ENCODE measurements at regions of chr19 and their contacts with region 1.

Region 1: DNA sequence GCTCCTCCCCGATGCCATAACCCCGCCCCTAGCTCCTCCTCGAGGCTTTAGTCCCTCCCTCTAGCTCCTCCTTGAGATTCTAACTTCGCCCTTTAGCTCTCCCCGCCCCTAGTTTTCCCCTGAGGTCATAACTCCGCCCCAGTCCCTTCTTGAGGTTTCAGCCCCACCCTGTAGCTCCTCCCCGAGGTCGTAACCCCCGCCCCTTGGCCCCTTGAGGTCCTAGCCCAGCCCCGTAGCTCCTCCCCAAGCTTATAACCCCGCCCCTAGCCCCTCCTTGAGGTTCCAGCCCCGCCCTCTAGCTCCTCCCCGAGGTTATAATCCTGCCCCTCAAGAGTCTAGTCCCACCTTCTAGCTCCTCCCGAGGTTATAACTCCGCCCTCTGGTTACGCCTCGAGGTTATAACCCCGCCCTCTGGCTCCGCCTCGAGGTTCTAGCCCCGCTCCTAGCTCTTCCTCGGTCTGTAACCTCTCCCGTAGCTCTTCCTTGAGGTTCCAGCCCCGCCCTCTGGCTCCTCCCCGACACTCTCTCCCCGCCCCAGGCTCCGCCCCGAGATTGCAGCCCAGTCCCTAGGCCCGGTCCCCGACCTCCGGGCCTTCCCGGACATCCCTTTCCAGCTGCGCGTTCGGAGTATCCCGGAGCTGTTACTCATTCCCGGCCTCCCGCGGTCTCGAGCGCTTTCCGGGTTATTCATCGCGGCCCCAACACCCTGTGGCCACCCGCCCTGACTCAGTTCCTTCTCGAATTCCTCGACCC is 1.4 kb downstream of the PLAUR start:
- DNase-seq: peak; percentile 99
- ATAC-seq: peak; percentile 86
- H3K4me3 Mint-ChIP-seq: peak overlapping the region; percentile 85
- H3K27ac Mint-ChIP-seq: peak overlapping the region; percentile 90
- H3K4me1 Mint-ChIP-seq: peaks cover 42% of the 10 kb centered on the region
- H3K27me3 Mint-ChIP-seq: no peaks in the 10 kb centered on the region

Region 2: DNA sequence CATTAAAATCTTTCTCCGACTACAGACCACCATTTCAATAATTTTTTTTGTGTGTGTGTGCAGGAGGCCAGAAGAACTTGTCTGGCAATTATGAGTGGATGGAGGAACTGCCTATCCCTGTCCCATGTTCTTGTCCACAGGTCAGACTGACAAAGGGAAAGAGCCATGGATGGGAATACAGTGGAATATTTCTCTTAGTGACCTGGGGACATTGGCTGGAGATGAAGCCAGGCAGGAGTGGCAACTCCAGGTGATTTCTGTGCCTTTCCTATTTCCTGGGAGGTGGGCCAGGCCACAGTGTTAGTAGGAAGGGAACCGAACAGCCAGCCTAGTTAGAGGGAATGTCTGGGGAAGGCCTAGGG is 402.9 kb before region 1 on chr19:
- CTCF ChIA-PET with region 1: no interaction called
- POLR2A ChIA-PET with region 1: no interaction called
- intact Hi-C with region 1: no loop called
- DNase-seq: no peak
- ATAC-seq: no peak
- H3K4me3 Mint-ChIP-seq: no peak overlapping the region
- H3K27ac Mint-ChIP-seq: no peak overlapping the region
- H3K4me1 Mint-ChIP-seq: no peaks in the 10 kb centered on the region
- H3K27me3 Mint-ChIP-seq: peaks cover 6% of the 10 kb centered on the region

Region 3: GRCh38 chr19:43416951-43417623 is 251.5 kb before region 1 on chr19:
- CTCF ChIA-PET with region 1: no interaction called
- POLR2A ChIA-PET with region 1: no interaction called
- intact Hi-C with region 1: no loop called
- DNase-seq: no peak
- ATAC-seq: no peak
- H3K4me3 Mint-ChIP-seq: no peak overlapping the region
- H3K27ac Mint-ChIP-seq: no peak overlapping the region
- H3K4me1 Mint-ChIP-seq: no peaks in the 10 kb centered on the region
- H3K27me3 Mint-ChIP-seq: no peaks in the 10 kb centered on the region

Region 4: GRCh38 chr19:43463381-43464136 is 205.0 kb before region 1 on chr19:
- CTCF ChIA-PET with region 1: interaction called, 10 read pairs
- POLR2A ChIA-PET with region 1: interaction called, 10 read pairs
- intact Hi-C with region 1: loop called (anchors 1 kb)
- DNase-seq: peak; percentile 100
- ATAC-seq: peak; percentile 90
- H3K4me3 Mint-ChIP-seq: peak overlapping the region; percentile 87
- H3K27ac Mint-ChIP-seq: peak overlapping the region; percentile 93
- H3K4me1 Mint-ChIP-seq: peaks cover 48% of the 10 kb centered on the region
- H3K27me3 Mint-ChIP-seq: no peaks in the 10 kb centered on the region

Region 5: GRCh38 chr19:43532962-43533545 is 135.5 kb before region 1 on chr19 and contains the start of gene ZNF575:
- CTCF ChIA-PET with region 1: interaction called, 9 read pairs
- POLR2A ChIA-PET with region 1: interaction called, 3 read pairs
- intact Hi-C with region 1: loop called (anchors 1 kb)
- DNase-seq: peak; percentile 95
- ATAC-seq: peak; percentile 57
- H3K4me3 Mint-ChIP-seq: peak within 1 kb of the TSS; percentile 83
- H3K27ac Mint-ChIP-seq: peak within 1 kb of the TSS; percentile 97
- H3K4me1 Mint-ChIP-seq: peaks cover 20% of the 10 kb centered on the region
- H3K27me3 Mint-ChIP-seq: no peaks in the 10 kb centered on the region
- total RNA-seq, gene ZNF575: 3.4 to 4.3 TPM

Region 6: DNA sequence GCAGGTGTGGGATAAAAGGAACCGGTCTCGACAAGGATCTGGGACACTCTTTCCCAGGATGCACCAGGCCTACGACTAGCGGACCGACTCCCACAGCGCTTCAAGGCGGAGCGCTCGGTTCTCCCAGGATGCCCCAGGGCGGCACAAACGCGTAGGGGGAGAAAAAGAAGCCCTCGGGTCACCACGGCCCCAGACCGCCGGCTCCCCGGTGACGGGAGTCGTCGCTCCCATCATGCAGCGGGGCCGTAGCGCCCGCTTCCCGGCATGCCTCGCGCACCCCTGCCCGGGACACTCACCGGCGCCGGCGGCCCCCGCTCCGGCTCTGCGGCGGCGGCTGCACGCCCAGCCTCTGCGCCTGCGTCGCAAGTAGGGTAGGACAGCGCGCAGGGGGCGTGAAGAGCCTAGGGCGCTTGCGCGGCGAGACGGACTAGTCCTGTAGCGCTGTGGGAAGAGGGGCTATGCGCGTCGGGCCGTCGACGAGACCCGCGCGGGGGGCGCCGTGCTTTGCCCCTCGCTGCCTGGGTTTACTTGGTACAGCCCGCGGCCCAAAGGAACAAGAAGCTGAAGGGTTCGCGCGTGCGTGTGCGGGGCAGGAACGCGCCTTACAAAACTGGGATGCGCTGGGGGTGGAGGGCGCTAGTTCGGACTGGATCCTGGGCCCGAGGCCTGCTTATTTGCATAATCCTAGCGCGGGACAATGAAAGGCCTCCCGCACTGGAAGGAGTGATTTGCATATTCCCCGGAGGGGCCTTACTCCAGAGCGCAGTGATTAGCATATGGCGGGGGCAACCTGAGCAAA is 49.1 kb before region 1 on chr19 and contains the start of gene ZNF428:
- CTCF ChIA-PET with region 1: interaction called, 3 read pairs
- POLR2A ChIA-PET with region 1: no interaction called
- intact Hi-C with region 1: loop called in 1 of 2 experiments (anchors 1 kb)
- DNase-seq: peak; percentile 94
- ATAC-seq: peak; percentile 92
- H3K4me3 Mint-ChIP-seq: peak within 1 kb of the TSS; percentile 94
- H3K27ac Mint-ChIP-seq: peak within 1 kb of the TSS; percentile 99
- H3K4me1 Mint-ChIP-seq: peaks cover 17% of the 10 kb centered on the region
- H3K27me3 Mint-ChIP-seq: no peaks in the 10 kb centered on the region
- total RNA-seq, gene ZNF428: 9.0 to 10.1 TPM

Region 7: DNA sequence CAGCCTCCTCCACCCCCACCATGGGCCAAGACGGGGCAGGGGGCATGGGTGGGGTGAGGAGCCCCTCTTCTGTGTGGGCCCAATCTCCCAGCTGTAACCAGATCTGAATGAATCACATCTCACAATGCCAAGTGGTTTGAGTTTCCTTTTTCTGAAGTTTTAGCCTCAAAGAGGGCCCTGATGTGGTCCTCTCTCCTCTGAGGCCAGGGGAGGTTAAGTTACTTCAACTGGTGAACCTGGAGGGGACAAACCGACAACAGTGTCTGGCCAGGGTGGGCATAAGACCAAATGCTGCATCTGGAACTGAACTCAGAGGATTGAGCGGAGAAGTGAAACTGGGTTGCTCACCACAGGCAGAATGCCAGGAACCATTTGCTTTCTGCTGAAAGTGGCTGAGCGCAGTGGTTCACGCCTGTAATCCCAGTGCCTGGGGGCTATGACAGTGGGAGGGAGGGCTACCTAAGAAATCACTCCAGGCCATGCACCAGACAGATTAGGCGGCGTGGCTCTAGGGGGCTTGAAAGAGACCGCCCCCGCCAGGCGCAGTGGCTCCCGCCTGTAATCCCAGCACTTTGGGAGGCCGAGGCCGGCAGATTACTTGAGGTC is 31.9 kb after region 1 on chr19:
- CTCF ChIA-PET with region 1: interaction called, 7 read pairs
- POLR2A ChIA-PET with region 1: interaction called, 9 read pairs
- intact Hi-C with region 1: loop called (anchors 1 to 2 kb)
- DNase-seq: peak; percentile 47
- ATAC-seq: peak; percentile 26
- H3K4me3 Mint-ChIP-seq: peak overlapping the region; percentile 69
- H3K27ac Mint-ChIP-seq: peak overlapping the region; percentile 99
- H3K4me1 Mint-ChIP-seq: peaks cover 21% of the 10 kb centered on the region
- H3K27me3 Mint-ChIP-seq: peaks cover 18% of the 10 kb centered on the region

Region 8: GRCh38 chr19:43784981-43785808 is 116.6 kb after region 1 on chr19:
- CTCF ChIA-PET with region 1: interaction called, 4 read pairs
- POLR2A ChIA-PET with region 1: no interaction called
- intact Hi-C with region 1: loop called (anchors 1 to 2 kb)
- DNase-seq: peak; percentile 76
- ATAC-seq: peak; percentile 11
- H3K4me3 Mint-ChIP-seq: peak overlapping the region; percentile 57
- H3K27ac Mint-ChIP-seq: peak overlapping the region; percentile 81
- H3K4me1 Mint-ChIP-seq: peaks cover 39% of the 10 kb centered on the region
- H3K27me3 Mint-ChIP-seq: peaks cover 7% of the 10 kb centered on the region